MCF 10A (cell line): ENCODE measurements at regions of chrX and their contacts with region 1.

Region 1: DNA sequence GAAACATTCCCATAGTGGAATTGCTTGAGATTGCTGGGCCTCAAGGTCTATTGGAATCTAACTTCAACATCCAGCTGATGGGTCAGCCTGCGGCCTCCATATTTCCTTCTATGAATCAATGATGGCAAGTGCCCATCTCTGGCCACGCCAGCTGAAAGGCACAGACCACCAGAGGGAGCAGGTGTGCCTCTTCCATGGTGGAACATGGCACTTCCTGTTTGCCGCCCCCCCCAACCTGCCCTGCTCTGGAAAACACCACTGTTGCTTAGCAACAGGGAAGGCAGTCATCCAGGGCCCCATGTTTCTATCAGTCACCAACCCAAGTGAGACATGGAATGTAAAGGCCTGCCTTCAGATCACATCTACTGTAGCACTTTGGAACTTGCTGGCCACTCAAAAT is 11.6 kb downstream of the PAGE4 start:
- DNase-seq: peak; percentile 57
- H3K4me3 Mint-ChIP-seq: no peak overlapping the region
- H3K27ac Mint-ChIP-seq: no peak overlapping the region
- H3K4me1 Mint-ChIP-seq: no peaks in the 10 kb centered on the region
- H3K27me3 Mint-ChIP-seq: peaks cover 26% of the 10 kb centered on the region
- CTCF ChIP-seq: peak; percentile 19

Region 2: GRCh38 chrX:49291615-49292337 is 548.9 kb before region 1 on chrX:
- CTCF ChIA-PET with region 1: interaction called, 5 read pairs
- POLR2A ChIA-PET with region 1: no interaction called
- intact Hi-C with region 1: loop called (anchors 5 kb)
- DNase-seq: peak; percentile 57
- H3K4me3 Mint-ChIP-seq: no peak overlapping the region
- H3K27ac Mint-ChIP-seq: no peak overlapping the region
- H3K4me1 Mint-ChIP-seq: no peaks in the 10 kb centered on the region
- H3K27me3 Mint-ChIP-seq: peaks cover 13% of the 10 kb centered on the region
- CTCF ChIP-seq: peak; percentile 52

Region 3: GRCh38 chrX:49761481-49761880 is 79.2 kb before region 1 on chrX:
- CTCF ChIA-PET with region 1: interaction called, 24 read pairs
- POLR2A ChIA-PET with region 1: no interaction called
- intact Hi-C with region 1: loop called (anchors 5 kb)
- DNase-seq: peak; percentile 33
- H3K4me3 Mint-ChIP-seq: no peak overlapping the region
- H3K27ac Mint-ChIP-seq: no peak overlapping the region
- H3K4me1 Mint-ChIP-seq: no peaks in the 10 kb centered on the region
- H3K27me3 Mint-ChIP-seq: peaks cover 71% of the 10 kb centered on the region
- CTCF ChIP-seq: peak; percentile 37

Region 4: DNA sequence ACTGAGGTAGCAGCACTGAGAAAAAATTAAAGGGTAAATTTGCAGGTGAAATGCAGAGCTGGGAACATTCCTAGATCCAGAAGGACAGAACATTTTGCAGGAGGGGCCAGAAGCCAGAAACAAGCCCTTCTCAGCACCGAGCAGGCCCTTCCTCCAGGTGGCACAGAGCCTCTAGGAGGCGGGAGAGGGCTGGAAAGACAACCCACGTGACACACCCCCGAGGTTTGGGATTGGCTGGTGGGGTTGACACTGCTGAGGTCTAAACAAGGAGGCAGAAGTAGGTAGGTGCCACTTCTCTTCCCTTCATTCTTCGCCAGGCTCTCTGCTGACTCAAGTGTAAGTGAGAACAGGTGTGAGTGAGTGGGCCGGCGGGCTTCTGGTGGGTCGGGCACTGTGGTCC is 11.7 kb before region 1 on chrX and contains the start of gene PAGE4:
- CTCF ChIA-PET with region 1: interaction called, 14 read pairs
- POLR2A ChIA-PET with region 1: interaction called, 3 read pairs
- intact Hi-C with region 1: no loop called
- DNase-seq: no peak
- H3K4me3 Mint-ChIP-seq: no peak within 1 kb of the TSS
- H3K27ac Mint-ChIP-seq: no peak within 1 kb of the TSS
- H3K4me1 Mint-ChIP-seq: no peaks in the 10 kb centered on the region
- H3K27me3 Mint-ChIP-seq: peaks cover 74% of the 10 kb centered on the region
- CTCF ChIP-seq: no peak
- total RNA-seq, gene PAGE4: not detected in 2 replicates

Region 5: GRCh38 chrX:49901048-49901447 is 60.4 kb after region 1 on chrX:
- CTCF ChIA-PET with region 1: no interaction called
- POLR2A ChIA-PET with region 1: no interaction called
- intact Hi-C with region 1: no loop called
- DNase-seq: no peak
- H3K4me3 Mint-ChIP-seq: no peak overlapping the region
- H3K27ac Mint-ChIP-seq: no peak overlapping the region
- H3K4me1 Mint-ChIP-seq: no peaks in the 10 kb centered on the region
- H3K27me3 Mint-ChIP-seq: peaks cover 85% of the 10 kb centered on the region
- CTCF ChIP-seq: no peak

Region 6: GRCh38 chrX:49947781-49948180 is 107.1 kb after region 1 on chrX:
- CTCF ChIA-PET with region 1: no interaction called
- POLR2A ChIA-PET with region 1: no interaction called
- intact Hi-C with region 1: no loop called
- DNase-seq: no peak
- H3K4me3 Mint-ChIP-seq: no peak overlapping the region
- H3K27ac Mint-ChIP-seq: no peak overlapping the region
- H3K4me1 Mint-ChIP-seq: no peaks in the 10 kb centered on the region
- H3K27me3 Mint-ChIP-seq: peaks cover 18% of the 10 kb centered on the region
- CTCF ChIP-seq: no peak